ENCODE measurements at regions of chr5 and their contacts with region 1.

Region 1: GRCh38 chr5:172006321-172007174 is at the start of gene FBXW11:
- DNase-seq: peak; percentile 97
- H3K4me3 Mint-ChIP-seq: peak within 1 kb of the TSS; percentile 87
- H3K27ac Mint-ChIP-seq: peak within 1 kb of the TSS; percentile 93
- H3K4me1 Mint-ChIP-seq: peaks cover 49% of the 10 kb centered on the region
- H3K27me3 Mint-ChIP-seq: no peaks in the 10 kb centered on the region

Region 2: GRCh38 chr5:172046593-172046992 is 40.0 kb after region 1 on chr5:
- CTCF ChIA-PET with region 1: no interaction called
- DNase-seq: no peak
- H3K4me3 Mint-ChIP-seq: no peak overlapping the region
- H3K27ac Mint-ChIP-seq: no peak overlapping the region
- H3K4me1 Mint-ChIP-seq: no peaks in the 10 kb centered on the region
- H3K27me3 Mint-ChIP-seq: no peaks in the 10 kb centered on the region

Region 3: GRCh38 chr5:172059661-172060100 is 53.1 kb after region 1 on chr5:
- CTCF ChIA-PET with region 1: interaction called, 10 read pairs
- DNase-seq: no peak
- H3K4me3 Mint-ChIP-seq: no peak overlapping the region
- H3K27ac Mint-ChIP-seq: peak overlapping the region; percentile 85
- H3K4me1 Mint-ChIP-seq: peaks cover 15% of the 10 kb centered on the region
- H3K27me3 Mint-ChIP-seq: no peaks in the 10 kb centered on the region